Activated CD4-positive, alpha-beta memory T cell treated with anti-CD3 and anti-CD28 coated beads, Interleukin-2, amount 10 ng/mL, durations not matched to agents 7 days and 5 days (primary cell): ENCODE measurements at regions of chr12 and their contacts with region 1.

Region 1: DNA sequence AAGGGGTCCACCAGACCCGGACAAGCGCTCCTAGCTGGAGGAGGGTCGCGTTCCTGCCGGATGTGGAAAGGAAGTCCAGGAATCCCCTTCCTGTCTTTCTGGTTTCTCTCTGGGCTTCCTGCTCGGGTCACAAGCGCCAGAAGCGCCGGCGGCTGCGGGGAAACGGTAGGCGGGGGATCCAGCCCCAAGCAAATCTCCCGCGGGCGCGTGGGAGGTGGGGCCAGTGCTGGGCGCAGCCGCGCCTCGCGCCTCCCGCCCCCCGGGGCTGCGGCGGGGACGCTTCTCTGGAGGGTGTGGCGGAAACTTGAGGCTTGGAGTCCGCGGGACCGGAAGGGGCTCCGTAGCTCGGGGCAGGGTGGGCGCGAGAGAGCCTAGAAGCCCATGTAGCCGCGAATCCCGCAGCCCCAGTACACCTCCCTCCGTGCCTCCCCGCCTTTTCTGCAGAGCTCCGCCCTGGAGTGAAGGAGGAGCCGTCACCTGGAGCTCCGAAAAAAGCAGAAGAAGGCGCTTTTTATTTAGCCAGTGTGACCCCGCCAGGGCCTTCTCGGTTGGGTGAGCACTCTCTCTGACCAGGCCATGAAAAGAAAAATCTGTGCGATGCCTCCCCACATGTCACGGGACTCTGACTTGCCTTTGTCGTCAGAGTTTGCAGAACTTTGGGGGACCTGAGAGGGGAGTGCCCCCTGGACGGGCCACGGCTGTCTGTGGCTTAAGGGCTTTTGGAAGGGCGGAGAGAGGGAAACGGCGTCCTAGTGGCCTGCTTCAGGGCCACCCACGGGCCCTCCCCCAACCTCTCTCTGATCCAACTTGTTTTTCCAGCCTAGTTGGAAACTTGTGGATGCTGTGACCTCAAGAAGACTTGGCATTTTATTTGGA is 21.4 kb upstream of the CLEC2D start:
- DNase-seq: peak; percentile 97
- H3K4me3 Mint-ChIP-seq: peak overlapping the region; percentile 95
- H3K27ac Mint-ChIP-seq: peak overlapping the region; percentile 94
- H3K4me1 Mint-ChIP-seq: peaks cover 51% of the 10 kb centered on the region
- H3K27me3 Mint-ChIP-seq: no peaks in the 10 kb centered on the region

Region 2: DNA sequence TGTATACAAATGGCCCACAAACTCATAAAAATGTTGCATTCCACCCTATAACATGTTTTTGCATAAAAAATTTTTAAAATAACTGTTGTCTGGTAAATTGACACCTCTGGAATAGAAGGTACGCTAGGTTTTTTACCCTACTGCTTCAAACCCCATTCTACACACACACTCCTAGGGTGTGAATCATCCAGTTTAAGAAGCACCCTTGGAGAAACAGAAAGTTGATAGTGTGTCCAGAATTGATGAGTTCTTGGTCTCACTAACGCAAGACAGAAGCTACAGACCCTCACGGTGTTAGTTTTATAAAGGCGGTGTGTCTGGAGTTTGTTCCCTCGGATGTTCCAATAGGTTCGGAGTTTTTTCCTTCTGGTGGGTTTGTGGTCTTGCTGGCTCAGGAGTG is 198.9 kb before region 1 on chr12:
- CTCF ChIA-PET with region 1: no interaction called
- POLR2A ChIA-PET with region 1: interaction called, 19 read pairs
- DNase-seq: no peak
- H3K4me3 Mint-ChIP-seq: peak overlapping the region; percentile 97
- H3K27ac Mint-ChIP-seq: peak overlapping the region; percentile 45
- H3K4me1 Mint-ChIP-seq: peaks cover 29% of the 10 kb centered on the region
- H3K27me3 Mint-ChIP-seq: no peaks in the 10 kb centered on the region

Region 3: DNA sequence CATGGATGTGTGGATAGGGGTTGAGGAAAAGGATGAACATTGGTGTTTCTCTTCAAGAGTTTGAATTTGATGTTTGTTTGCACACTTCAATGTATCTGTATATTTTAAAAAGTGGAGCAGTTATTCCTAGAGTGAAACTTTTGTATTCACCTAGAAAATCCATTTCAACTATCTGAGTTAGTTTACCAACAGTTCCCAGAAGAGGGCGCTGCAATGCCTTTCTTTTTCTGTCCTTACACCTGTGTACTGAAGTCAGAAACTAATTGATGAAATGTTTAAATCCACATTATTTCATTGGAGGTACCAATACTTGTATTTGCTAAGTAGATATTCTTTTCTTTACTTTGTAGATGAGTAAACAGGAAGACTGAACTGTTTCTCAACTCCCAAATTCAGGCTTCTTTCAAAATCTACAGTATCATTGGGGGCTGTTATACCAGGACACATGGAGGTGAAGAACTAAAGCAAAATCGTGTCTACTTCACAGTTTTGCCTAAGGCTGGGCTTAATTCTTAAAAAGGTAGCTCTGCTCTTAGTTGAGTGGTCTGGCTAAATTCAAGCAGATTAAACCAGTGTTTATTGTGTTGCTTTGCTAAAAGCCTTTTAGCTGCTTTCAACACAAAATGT is 13.8 kb before region 1 on chr12:
- CTCF ChIA-PET with region 1: interaction called, 22 read pairs
- POLR2A ChIA-PET with region 1: interaction called, 45 read pairs
- DNase-seq: peak; percentile 80
- H3K4me3 Mint-ChIP-seq: no peak overlapping the region
- H3K27ac Mint-ChIP-seq: no peak overlapping the region
- H3K4me1 Mint-ChIP-seq: peaks cover 50% of the 10 kb centered on the region
- H3K27me3 Mint-ChIP-seq: peaks cover 7% of the 10 kb centered on the region

Region 4: GRCh38 chr12:9687228-9687627 is 39.2 kb after region 1 on chr12:
- CTCF ChIA-PET with region 1: interaction called, 4 read pairs
- POLR2A ChIA-PET with region 1: interaction called, 13 read pairs
- DNase-seq: no peak
- H3K4me3 Mint-ChIP-seq: no peak overlapping the region
- H3K27ac Mint-ChIP-seq: peak overlapping the region; percentile 10
- H3K4me1 Mint-ChIP-seq: peaks cover 77% of the 10 kb centered on the region
- H3K27me3 Mint-ChIP-seq: no peaks in the 10 kb centered on the region

Region 5: GRCh38 chr12:9707864-9708808 is 60.1 kb after region 1 on chr12:
- CTCF ChIA-PET with region 1: interaction called, 9 read pairs
- POLR2A ChIA-PET with region 1: interaction called, 25 read pairs
- DNase-seq: peak; percentile 74
- H3K4me3 Mint-ChIP-seq: peak overlapping the region; percentile 7
- H3K27ac Mint-ChIP-seq: peak overlapping the region; percentile 70
- H3K4me1 Mint-ChIP-seq: peaks cover 40% of the 10 kb centered on the region
- H3K27me3 Mint-ChIP-seq: no peaks in the 10 kb centered on the region

Region 6: DNA sequence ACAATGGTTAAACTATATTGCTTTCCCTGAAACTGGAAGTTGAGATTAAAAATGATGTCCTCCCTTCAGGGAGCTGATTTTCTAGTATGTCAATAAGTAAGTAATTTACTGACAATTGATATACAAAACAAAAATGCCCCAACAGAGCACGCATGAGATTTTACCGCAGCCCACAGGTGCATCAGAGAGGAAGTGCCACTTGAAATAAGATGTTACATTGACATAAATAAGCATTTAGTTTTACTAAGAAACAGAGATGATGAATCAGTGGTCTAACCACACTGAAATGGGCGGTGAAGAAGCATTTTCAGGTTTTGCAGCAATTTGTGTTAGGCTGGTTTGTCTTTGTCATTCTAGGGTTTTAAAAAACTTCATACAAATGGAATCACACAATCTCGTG is 93.7 kb after region 1 on chr12:
- CTCF ChIA-PET with region 1: interaction called, 9 read pairs
- POLR2A ChIA-PET with region 1: interaction called, 194 read pairs
- DNase-seq: peak; percentile 89
- H3K4me3 Mint-ChIP-seq: peak overlapping the region; percentile 79
- H3K27ac Mint-ChIP-seq: peak overlapping the region; percentile 98
- H3K4me1 Mint-ChIP-seq: peaks cover 71% of the 10 kb centered on the region
- H3K27me3 Mint-ChIP-seq: no peaks in the 10 kb centered on the region

Region 7: GRCh38 chr12:9797722-9798619 is 149.9 kb after region 1 on chr12:
- CTCF ChIA-PET with region 1: interaction called, 3 read pairs
- POLR2A ChIA-PET with region 1: interaction called, 11 read pairs
- DNase-seq: peak; percentile 76
- H3K4me3 Mint-ChIP-seq: no peak overlapping the region
- H3K27ac Mint-ChIP-seq: peak overlapping the region; percentile 92
- H3K4me1 Mint-ChIP-seq: peaks cover 47% of the 10 kb centered on the region
- H3K27me3 Mint-ChIP-seq: peaks cover 15% of the 10 kb centered on the region